ENCODE measurements at regions of chr18 and their contacts with region 1.

Region 1: DNA sequence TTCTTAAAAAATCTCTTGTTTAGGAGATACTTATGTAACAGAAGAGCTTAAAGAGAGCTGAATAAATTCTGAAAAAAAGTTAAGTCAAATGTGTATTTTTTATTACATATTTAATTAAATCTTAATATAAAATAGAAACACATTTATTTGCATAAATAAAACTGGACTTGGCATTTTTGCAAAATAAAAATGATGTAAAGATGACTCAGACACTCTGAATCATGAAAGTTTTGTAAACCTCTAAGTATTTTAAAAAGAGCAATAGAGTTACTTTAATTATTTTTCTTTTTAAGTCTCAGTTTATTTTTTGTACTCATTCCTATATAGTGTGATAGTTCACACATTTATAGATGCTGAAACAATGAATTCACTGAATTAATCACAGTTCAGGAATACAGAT is 110.0 kb upstream of the DTNA start:
- DNase-seq: no peak
- ATAC-seq: no peak

Region 2: GRCh38 chr18:34352385-34353163 is 247.5 kb before region 1 on chr18:
- intact Hi-C with region 1: loop called in 1 of 2 experiments (anchors 10 kb)
- DNase-seq: no peak
- ATAC-seq: no peak

Region 3: GRCh38 chr18:34801774-34802173 is 201.7 kb after region 1 on chr18:
- intact Hi-C with region 1: no loop called
- DNase-seq: no peak
- ATAC-seq: no peak